ENCODE measurements at regions of chr4 and their contacts with region 1.

Region 1: GRCh38 chr4:118888666-118889311 is at the start of gene SYNPO2:
- DNase-seq: peak; percentile 79 to 87
- ATAC-seq: peak; percentile 74 to 81 (median 80)
- H3K4me3 ChIP-seq: peak within 1 kb of the TSS; percentile 75
- H3K27ac ChIP-seq: peak within 1 kb of the TSS; percentile 88
- H3K4me1 ChIP-seq: no peaks in the 10 kb centered on the region
- H3K27me3 ChIP-seq: no peaks in the 10 kb centered on the region
- CTCF ChIP-seq: no peak
- total RNA-seq, gene SYNPO2: 1,548 to 2,858 (median 2,312) TPM

Region 2: GRCh38 chr4:118740869-118741268 is 147.9 kb before region 1 on chr4:
- intact Hi-C with region 1: loop called in 1 of 2 experiments (anchors 10 kb)
- DNase-seq: no peak
- ATAC-seq: peak in 1 of 4 donors; percentile 68
- H3K4me3 ChIP-seq: peak overlapping the region; percentile 6
- H3K27ac ChIP-seq: peak overlapping the region; percentile 4
- H3K4me1 ChIP-seq: peaks cover 18% of the 10 kb centered on the region
- H3K27me3 ChIP-seq: no peaks in the 10 kb centered on the region
- CTCF ChIP-seq: peak; percentile 63

Region 3: DNA sequence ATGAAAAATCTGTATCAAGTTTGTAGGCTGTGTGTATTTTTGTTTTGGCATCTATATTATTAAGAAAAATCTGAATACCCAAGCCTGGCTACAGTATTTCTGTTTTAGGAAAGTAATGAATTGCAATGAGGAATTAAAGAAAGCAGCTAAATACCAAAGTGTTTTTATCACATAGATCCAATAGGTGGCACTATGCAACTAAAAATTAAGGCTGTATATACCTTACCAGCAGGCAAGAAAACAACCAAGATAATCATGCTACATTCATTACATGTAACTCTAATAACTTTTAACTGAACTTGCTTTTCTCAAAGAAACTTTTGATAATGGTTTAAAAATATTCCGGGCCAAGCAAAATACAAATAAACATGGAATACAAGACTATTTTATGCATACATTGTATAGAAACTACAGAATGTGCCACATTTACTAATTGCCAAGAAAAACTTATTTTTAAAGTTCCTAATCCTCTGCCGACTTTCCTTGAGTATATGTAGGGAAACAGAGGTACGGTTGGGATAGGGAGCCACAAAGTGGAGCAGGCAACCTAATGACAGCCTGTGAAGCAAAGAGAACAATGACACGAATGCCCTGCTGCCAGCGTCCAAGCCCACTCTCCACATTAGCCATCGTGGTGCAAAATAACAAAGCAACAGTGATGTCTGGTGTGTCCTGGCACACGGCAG is 116.6 kb before region 1 on chr4:
- intact Hi-C with region 1: loop called in 1 of 2 experiments (anchors 5 kb)
- DNase-seq: no peak
- ATAC-seq: peak; percentile 79 to 92 (median 84)
- H3K4me3 ChIP-seq: peak overlapping the region; percentile 23
- H3K27ac ChIP-seq: peak overlapping the region; percentile 17
- H3K4me1 ChIP-seq: peaks cover 16% of the 10 kb centered on the region
- H3K27me3 ChIP-seq: no peaks in the 10 kb centered on the region
- CTCF ChIP-seq: peak; percentile 70

Region 4: GRCh38 chr4:118835571-118836300 is 53.1 kb before region 1 on chr4 and contains the start of gene SEC24D:
- intact Hi-C with region 1: loop called in 1 of 2 experiments (anchors 5 kb)
- DNase-seq: peak; percentile 92 to 95
- ATAC-seq: peak; percentile 96 to 98 (median 98)
- H3K4me3 ChIP-seq: peak within 1 kb of the TSS; percentile 100
- H3K27ac ChIP-seq: peak within 1 kb of the TSS; percentile 93
- H3K4me1 ChIP-seq: peaks cover 9% of the 10 kb centered on the region
- H3K27me3 ChIP-seq: no peaks in the 10 kb centered on the region
- CTCF ChIP-seq: no peak
- total RNA-seq, gene SEC24D: 5.8 to 13.7 (median 6.3) TPM

Region 5: DNA sequence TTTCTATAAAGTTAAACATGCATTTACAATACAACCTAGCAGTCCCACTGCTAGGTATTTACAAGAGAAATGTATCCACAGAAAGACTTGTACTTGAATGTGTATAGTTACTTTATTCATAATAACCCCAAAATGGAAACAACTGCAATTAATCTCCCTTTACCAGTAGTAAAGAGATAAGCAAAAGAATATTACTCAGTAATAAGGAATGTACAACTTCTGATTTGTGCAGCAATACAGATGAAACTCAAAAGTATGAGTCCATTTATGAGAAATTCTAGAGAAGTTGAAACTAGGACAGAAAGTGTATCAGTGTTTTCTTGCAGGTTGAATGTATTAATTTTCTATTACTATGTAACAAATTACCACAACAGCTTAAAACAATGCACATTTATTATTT is 338.9 kb after region 1 on chr4:
- intact Hi-C with region 1: no loop called
- DNase-seq: no peak
- ATAC-seq: no peak
- H3K4me3 ChIP-seq: no peak overlapping the region
- H3K27ac ChIP-seq: no peak overlapping the region
- H3K4me1 ChIP-seq: peaks cover 33% of the 10 kb centered on the region
- H3K27me3 ChIP-seq: peaks cover 0 to 2% (median 0%) of the 10 kb centered on the region in 3 donors
- CTCF ChIP-seq: no peak

Measured in psoas muscle (tissue), 8 donors.